BJ (cell line): ENCODE measurements at regions of chr1 and their contacts with region 1.

Region 1: DNA sequence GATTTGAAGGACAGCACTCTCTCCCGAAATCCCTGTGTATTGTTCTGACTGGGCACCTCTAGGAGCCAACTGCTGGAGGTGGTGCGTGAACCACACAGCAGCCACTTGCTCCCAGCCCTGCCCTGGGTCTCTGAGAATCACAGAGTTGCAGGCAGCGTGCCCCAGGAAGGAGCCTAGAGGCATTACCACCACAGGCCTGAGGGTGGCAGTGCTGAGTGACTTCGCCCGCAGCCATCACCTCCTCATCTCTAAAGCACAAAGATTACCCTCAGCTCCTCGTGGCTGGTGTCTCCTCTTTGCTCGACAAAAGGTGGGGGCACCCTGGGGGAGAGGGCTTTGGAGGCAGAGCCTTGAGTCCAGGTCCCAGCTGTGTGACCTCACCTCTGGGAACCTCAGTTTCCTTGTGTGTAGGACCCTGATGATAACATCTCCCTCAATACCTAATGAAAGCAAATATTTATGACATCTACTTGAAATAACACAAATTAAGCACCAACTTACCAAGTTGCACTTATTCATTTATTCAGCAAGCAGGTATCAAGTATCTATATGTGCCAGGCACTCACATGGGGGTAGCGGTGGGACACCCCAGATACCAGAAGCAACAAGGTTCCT is 86.3 kb downstream of the VWA5B1 start:
- DNase-seq: no peak
- H3K4me3 ChIP-seq: no peak overlapping the region
- H3K27me3 ChIP-seq: peaks cover 4% of the 10 kb centered on the region; the same call in 1 of the 2 replicates
- CTCF ChIP-seq: peak; percentile 90

Region 2: GRCh38 chr1:20271498-20272400 is 105.2 kb before region 1 on chr1:
- CTCF ChIA-PET with region 1: no interaction called
- POLR2A ChIA-PET with region 1: no interaction called
- DNase-seq: no peak
- H3K4me3 ChIP-seq: no peak overlapping the region
- H3K27me3 ChIP-seq: peaks cover 7% of the 10 kb centered on the region
- CTCF ChIP-seq: no peak

Region 3: GRCh38 chr1:20485527-20486456 is 108.8 kb after region 1 on chr1 and contains the start of gene CAMK2N1:
- CTCF ChIA-PET with region 1: interaction called, 10 read pairs
- POLR2A ChIA-PET with region 1: no interaction called
- DNase-seq: no peak
- H3K4me3 ChIP-seq: peak within 1 kb of the TSS; percentile 90
- H3K27me3 ChIP-seq: peaks cover 5% of the 10 kb centered on the region
- CTCF ChIP-seq: no peak
- polyA plus RNA-seq, gene CAMK2N1: 23.5 and 40.2 TPM in 2 replicates